ENCODE measurements at regions of chr12 and their contacts with region 1.

Region 1: GRCh38 chr12:7142056-7142644 is 12.0 kb downstream of the CLSTN3 start:
- DNase-seq: peak; percentile 78
- ATAC-seq: peak; percentile 95
- H3K4me3 Mint-ChIP-seq: no peak overlapping the region
- H3K27ac Mint-ChIP-seq: no peak overlapping the region
- H3K4me1 Mint-ChIP-seq: no peaks in the 10 kb centered on the region
- H3K27me3 Mint-ChIP-seq: no peaks in the 10 kb centered on the region
- CTCF ChIP-seq: peak; percentile 86

Region 2: GRCh38 chr12:7060353-7060954 is 81.7 kb before region 1 on chr12 and contains the start of gene C1S:
- CTCF ChIA-PET with region 1: interaction called, 15 read pairs
- POLR2A ChIA-PET with region 1: no interaction called
- DNase-seq: peak; percentile 42
- ATAC-seq: peak; percentile 92
- H3K4me3 Mint-ChIP-seq: peak within 1 kb of the TSS; percentile 46
- H3K27ac Mint-ChIP-seq: peak within 1 kb of the TSS; percentile 27; the same call in 1 of the 2 replicates
- H3K4me1 Mint-ChIP-seq: peaks cover 17% of the 10 kb centered on the region
- H3K27me3 Mint-ChIP-seq: peaks cover 2% of the 10 kb centered on the region; the same call in 1 of the 2 replicates
- CTCF ChIP-seq: no peak
- total RNA-seq, gene C1S: 6.2 to 8.8 TPM (median 7.6 TPM) in 3 replicates

Region 3: GRCh38 chr12:7155481-7156034 is 13.4 kb after region 1 on chr12:
- CTCF ChIA-PET with region 1: interaction called, 24 read pairs
- POLR2A ChIA-PET with region 1: no interaction called
- DNase-seq: no peak
- ATAC-seq: peak; percentile 43; the same call in 1 of the 2 replicates
- H3K4me3 Mint-ChIP-seq: no peak overlapping the region
- H3K27ac Mint-ChIP-seq: no peak overlapping the region
- H3K4me1 Mint-ChIP-seq: no peaks in the 10 kb centered on the region
- H3K27me3 Mint-ChIP-seq: no peaks in the 10 kb centered on the region
- CTCF ChIP-seq: no peak

Region 4: GRCh38 chr12:7162691-7163114 is 20.6 kb after region 1 on chr12:
- CTCF ChIA-PET with region 1: interaction called, 15 read pairs
- POLR2A ChIA-PET with region 1: no interaction called
- DNase-seq: peak; percentile 73
- ATAC-seq: peak; percentile 97
- H3K4me3 Mint-ChIP-seq: peak overlapping the region; percentile 44
- H3K27ac Mint-ChIP-seq: no peak overlapping the region
- H3K4me1 Mint-ChIP-seq: peaks cover 4% of the 10 kb centered on the region; the same call in 1 of the 2 replicates
- H3K27me3 Mint-ChIP-seq: peaks cover 48% of the 10 kb centered on the region
- CTCF ChIP-seq: peak; percentile 23; the same call in 1 of the 2 replicates

Region 5: DNA sequence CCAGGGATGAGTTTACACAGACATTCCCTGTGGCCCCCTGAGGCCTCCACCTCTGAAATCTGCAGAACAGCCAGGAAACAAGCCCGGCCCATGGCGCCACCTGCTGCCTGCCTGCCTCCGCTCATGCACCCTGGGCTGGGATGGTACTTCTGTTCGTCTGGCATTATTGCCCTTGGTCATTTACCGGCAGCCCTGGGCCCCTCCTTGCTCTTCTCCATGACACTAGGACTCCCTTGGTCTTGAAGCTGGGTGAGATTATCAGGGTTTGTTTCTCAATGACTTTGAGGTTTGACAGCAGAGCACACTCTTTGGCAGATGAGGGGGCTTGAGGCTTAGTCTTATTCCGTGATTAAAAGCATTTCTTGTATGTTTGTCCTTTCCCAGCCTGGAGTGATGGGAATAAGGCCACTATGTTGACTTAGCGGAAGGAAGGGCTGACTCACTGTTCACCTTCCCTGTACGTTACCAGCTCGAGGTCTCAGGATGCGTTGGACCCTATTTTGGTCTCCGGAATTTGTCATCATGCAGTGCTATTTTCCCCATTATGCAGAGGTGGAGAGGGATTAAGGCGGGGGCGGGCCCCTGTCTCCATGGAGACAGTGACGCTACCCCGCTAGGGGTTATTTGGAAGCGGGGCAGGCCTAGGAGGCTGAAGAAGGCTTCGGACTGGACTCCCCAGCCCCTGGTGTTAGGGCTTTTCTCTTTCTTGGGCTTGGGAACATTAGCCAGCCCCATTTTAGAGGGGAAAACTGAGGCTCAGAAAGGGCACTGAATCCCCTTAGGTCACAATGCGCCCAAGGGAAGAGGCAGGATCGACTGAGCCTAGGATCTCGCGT is 46.6 kb after region 1 on chr12:
- CTCF ChIA-PET with region 1: interaction called, 12 read pairs
- POLR2A ChIA-PET with region 1: no interaction called
- DNase-seq: peak; percentile 91
- ATAC-seq: peak; percentile 74
- H3K4me3 Mint-ChIP-seq: peak overlapping the region; percentile 87
- H3K27ac Mint-ChIP-seq: no peak overlapping the region
- H3K4me1 Mint-ChIP-seq: peaks cover 29% of the 10 kb centered on the region
- H3K27me3 Mint-ChIP-seq: peaks cover 2% of the 10 kb centered on the region
- CTCF ChIP-seq: 0 out of 2 replicates have a peak, but pooled peaks have one; percentile 30